ENCODE measurements at regions of chr3 and their contacts with region 1.

Region 1: DNA sequence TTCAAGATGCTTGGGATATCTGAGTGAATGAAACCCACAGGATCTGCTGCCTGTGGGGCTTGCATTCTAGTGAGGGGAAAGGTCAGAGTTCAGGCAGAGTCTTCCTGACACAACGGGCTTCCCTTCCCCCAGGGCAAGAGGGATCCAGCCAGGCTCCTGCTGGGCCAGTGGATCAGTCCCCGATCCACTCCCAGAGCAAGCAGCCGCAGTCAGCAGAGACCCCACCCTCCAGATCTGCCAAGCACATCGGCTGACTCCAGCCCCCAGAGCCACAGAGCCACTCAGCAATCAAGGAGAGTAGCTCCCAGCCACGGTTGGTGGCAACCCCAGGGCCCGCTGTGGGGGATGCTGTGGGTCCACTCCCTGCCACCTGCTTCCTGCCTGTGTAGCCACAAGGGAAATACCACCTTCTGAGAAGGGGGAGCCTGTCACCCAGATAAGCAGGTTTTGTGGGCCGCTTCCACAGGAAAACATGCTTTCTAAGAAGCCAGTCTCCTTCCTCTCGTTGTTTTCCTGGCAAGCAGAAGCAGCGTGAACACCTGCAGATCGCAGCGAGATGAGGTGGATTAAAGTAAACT is 44.9 kb downstream of the CPN2 start:
- DNase-seq: peak; percentile 77
- H3K4me3 Mint-ChIP-seq: peak overlapping the region; percentile 30
- H3K27ac Mint-ChIP-seq: peak overlapping the region; percentile 85
- H3K4me1 Mint-ChIP-seq: peaks cover 38% of the 10 kb centered on the region
- H3K27me3 Mint-ChIP-seq: peaks cover 2% of the 10 kb centered on the region

Region 2: DNA sequence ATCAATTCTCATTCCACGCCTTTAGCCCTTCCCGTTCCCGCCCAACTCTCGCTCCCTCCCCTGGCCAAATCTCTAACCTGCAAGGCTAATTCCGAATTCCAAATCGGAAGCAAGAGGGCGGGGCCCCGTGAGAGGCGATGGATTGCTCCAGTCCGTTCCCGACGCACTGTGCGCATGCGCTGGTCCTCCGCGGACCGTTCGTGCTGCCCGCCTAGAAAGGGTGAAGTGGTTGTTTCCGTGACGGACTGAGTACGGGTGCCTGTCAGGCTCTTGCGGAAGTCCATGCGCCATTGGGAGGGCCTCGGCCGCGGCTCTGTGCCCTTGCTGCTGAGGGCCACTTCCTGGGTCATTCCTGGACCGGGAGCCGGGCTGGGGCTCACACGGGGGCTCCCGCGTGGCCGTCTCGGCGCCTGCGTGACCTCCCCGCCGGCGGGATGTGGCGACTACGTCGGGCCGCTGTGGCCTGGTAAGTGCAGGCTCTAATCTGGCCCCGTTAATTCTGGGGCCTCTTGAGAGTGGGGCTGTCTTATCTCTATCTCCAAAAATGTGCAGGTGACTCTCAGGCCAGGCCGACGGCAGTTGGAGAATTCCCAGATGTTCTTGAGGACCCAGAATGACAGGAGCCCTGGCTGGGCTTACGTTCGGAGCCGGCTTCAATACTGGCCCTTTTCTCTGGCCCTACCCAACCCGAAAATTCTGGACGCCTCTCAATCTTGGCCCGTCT is 713.1 kb before region 1 on chr3 and contains the start of gene OPA1:
- CTCF ChIA-PET with region 1: no interaction called
- POLR2A ChIA-PET with region 1: no interaction called
- intact Hi-C with region 1: loop called (anchors 1 kb)
- DNase-seq: peak; percentile 96
- H3K4me3 Mint-ChIP-seq: peak within 1 kb of the TSS; percentile 93
- H3K27ac Mint-ChIP-seq: peak within 1 kb of the TSS; percentile 97
- H3K4me1 Mint-ChIP-seq: peaks cover 37% of the 10 kb centered on the region
- H3K27me3 Mint-ChIP-seq: no peaks in the 10 kb centered on the region
- total RNA-seq, gene OPA1: 92.6 to 92.7 TPM

Region 3: GRCh38 chr3:194070634-194071409 is 235.4 kb before region 1 on chr3:
- CTCF ChIA-PET with region 1: no interaction called
- POLR2A ChIA-PET with region 1: no interaction called
- intact Hi-C with region 1: loop called (anchors 5 kb)
- DNase-seq: peak; percentile 88
- H3K4me3 Mint-ChIP-seq: peak overlapping the region; percentile 52
- H3K27ac Mint-ChIP-seq: no peak overlapping the region
- H3K4me1 Mint-ChIP-seq: peaks cover 21% of the 10 kb centered on the region
- H3K27me3 Mint-ChIP-seq: peaks cover 44% of the 10 kb centered on the region

Region 4: GRCh38 chr3:194112120-194113106 is 193.8 kb before region 1 on chr3:
- CTCF ChIA-PET with region 1: no interaction called
- POLR2A ChIA-PET with region 1: no interaction called
- intact Hi-C with region 1: no loop called
- DNase-seq: no peak
- H3K4me3 Mint-ChIP-seq: no peak overlapping the region
- H3K27ac Mint-ChIP-seq: no peak overlapping the region
- H3K4me1 Mint-ChIP-seq: no peaks in the 10 kb centered on the region
- H3K27me3 Mint-ChIP-seq: peaks cover 14% of the 10 kb centered on the region

Region 5: GRCh38 chr3:194204042-194204987 is 101.9 kb before region 1 on chr3:
- CTCF ChIA-PET with region 1: no interaction called
- POLR2A ChIA-PET with region 1: no interaction called
- intact Hi-C with region 1: loop called (anchors 10 kb)
- DNase-seq: peak; percentile 16
- H3K4me3 Mint-ChIP-seq: peak overlapping the region; percentile 52
- H3K27ac Mint-ChIP-seq: no peak overlapping the region
- H3K4me1 Mint-ChIP-seq: peaks cover 5% of the 10 kb centered on the region
- H3K27me3 Mint-ChIP-seq: peaks cover 40% of the 10 kb centered on the region

Region 6: GRCh38 chr3:194255252-194256039 is 50.8 kb before region 1 on chr3:
- CTCF ChIA-PET with region 1: no interaction called
- POLR2A ChIA-PET with region 1: no interaction called
- intact Hi-C with region 1: loop called (anchors 2 kb)
- DNase-seq: peak; percentile 66
- H3K4me3 Mint-ChIP-seq: peak overlapping the region; percentile 27
- H3K27ac Mint-ChIP-seq: no peak overlapping the region
- H3K4me1 Mint-ChIP-seq: peaks cover 7% of the 10 kb centered on the region
- H3K27me3 Mint-ChIP-seq: peaks cover 4% of the 10 kb centered on the region

Measured in activated CD4-positive, alpha-beta memory T cell treated with anti-CD3 and anti-CD28 coated beads for 36 hours (primary cell).